ENCODE measurements at regions of chr13 and their contacts with region 1.

Region 1: DNA sequence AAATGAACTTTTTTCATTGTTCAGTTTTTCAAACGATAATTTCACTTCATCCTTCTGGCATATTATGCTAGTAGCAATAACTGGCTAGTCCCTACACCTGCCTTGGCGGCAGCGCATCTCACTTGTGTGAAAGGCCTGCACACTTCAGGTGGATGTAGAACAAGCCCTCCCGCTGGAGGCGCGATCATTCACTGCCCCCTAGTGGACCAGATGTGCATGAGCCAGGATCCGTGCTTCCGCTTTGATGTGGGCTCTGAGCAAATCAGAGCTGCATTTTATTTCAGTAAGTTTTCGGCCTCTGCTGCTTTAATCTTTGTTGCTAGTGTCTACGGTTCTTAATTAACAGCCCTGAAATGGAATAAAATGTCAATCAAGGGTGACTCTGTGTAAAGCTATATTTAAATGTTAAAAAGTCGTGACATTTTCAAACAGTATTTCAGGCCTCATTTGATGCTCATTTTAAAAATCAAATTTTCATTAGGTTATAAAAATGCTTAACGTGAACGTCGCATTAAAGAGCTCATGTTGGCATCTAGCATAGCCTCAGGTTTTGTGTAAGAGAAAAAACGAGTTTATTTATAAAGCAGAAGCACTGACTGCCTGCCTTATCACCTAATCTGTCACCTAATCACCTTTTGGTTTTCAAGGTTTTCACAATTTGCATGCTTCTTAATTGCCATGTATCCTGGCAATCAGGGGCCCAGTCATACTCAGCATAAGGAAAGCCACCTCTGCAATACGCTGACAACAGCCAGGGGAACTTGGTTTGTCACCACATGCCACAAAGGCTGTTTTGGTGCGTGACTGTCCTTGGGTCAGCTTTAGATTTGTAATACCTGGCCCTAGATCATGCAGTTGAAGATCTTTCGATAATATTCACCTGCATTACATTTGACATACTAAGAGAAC is 112.2 kb downstream of the TEX26 start:
- DNase-seq: peak; percentile 74
- H3K4me3 ChIP-seq: no peak overlapping the region
- H3K27ac ChIP-seq: no peak overlapping the region
- H3K4me1 ChIP-seq: no peaks in the 10 kb centered on the region
- H3K27me3 ChIP-seq: no peaks in the 10 kb centered on the region
- CTCF ChIP-seq: peak; percentile 82 to 89 (median 88)
- POLR2A ChIP-seq: no peak

Region 2: GRCh38 chr13:30673669-30674521 is 370.7 kb before region 1 on chr13:
- intact Hi-C with region 1: loop called (anchors 10 kb)
- DNase-seq: peak; percentile 84
- H3K4me3 ChIP-seq: peak overlapping the region; percentile 40 to 45
- H3K27ac ChIP-seq: peak overlapping the region; percentile 76 to 77
- H3K4me1 ChIP-seq: no peaks in the 10 kb centered on the region
- H3K27me3 ChIP-seq: no peaks in the 10 kb centered on the region
- CTCF ChIP-seq: peak; percentile 45 to 82 (median 62)
- POLR2A ChIP-seq: peak; percentile 24

Region 3: GRCh38 chr13:30690282-30691188 is 354.1 kb before region 1 on chr13:
- intact Hi-C with region 1: no loop called
- DNase-seq: peak; percentile 38
- H3K4me3 ChIP-seq: peak overlapping the region; percentile 21 to 29
- H3K27ac ChIP-seq: peak overlapping the region; percentile 49 to 61
- H3K4me1 ChIP-seq: no peaks in the 10 kb centered on the region
- H3K27me3 ChIP-seq: no peaks in the 10 kb centered on the region
- CTCF ChIP-seq: no peak
- POLR2A ChIP-seq: no peak

Region 4: GRCh38 chr13:31009166-31009565 is 35.5 kb before region 1 on chr13:
- intact Hi-C with region 1: no loop called
- DNase-seq: no peak
- H3K4me3 ChIP-seq: no peak overlapping the region
- H3K27ac ChIP-seq: no peak overlapping the region
- H3K4me1 ChIP-seq: no peaks in the 10 kb centered on the region
- H3K27me3 ChIP-seq: no peaks in the 10 kb centered on the region
- CTCF ChIP-seq: no peak
- POLR2A ChIP-seq: no peak

Measured in prostate gland (tissue), 2 donors.